ENCODE measurements at regions of chr17 and their contacts with region 1.

Region 1: DNA sequence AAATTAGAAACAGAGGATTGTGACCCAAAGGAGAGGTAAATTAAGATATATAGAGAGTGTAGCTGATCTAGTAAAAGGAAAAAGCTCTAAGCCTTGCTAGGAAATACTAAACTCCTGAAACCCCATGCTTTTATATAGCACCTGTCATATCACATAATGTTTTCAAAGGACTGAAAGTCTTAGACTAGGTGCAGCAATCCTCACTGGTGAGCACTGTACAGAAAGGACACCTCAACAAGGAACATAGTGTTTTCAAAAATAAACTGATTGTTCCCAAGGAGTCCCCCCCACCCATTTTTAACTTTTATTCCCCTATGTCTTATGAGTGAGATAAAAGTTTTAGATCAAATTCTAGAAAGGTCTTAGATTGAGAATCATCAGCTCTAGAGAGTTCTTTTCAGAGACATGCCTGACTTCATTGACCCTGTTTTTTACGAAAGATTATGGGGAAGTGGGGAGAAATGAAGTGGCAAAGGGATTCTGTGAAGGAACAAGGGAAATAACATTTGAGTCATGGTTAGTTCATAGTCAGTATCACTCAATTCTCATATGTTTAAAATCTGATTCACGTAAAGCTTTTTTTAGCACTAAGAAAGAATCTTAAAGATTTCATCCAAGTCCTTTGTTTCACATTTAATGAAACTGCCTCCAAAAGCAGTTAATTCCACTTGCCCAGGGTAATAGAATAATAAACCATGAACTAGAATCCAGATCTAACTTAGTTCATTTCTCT is 166.4 kb downstream of the CYB561 start:
- DNase-seq: peak; percentile 90
- H3K4me3 ChIP-seq: no peak overlapping the region
- H3K27ac ChIP-seq: peak overlapping the region; percentile 96
- H3K4me1 ChIP-seq: peaks cover 51% of the 10 kb centered on the region
- H3K27me3 ChIP-seq: no peaks in the 10 kb centered on the region
- CTCF ChIP-seq: no peak

Region 2: GRCh38 chr17:63292421-63292820 is 12.8 kb after region 1 on chr17:
- CTCF ChIA-PET with region 1: no interaction called
- dilution Hi-C with region 1: no loop called
- in situ Hi-C with region 1: no loop called
- intact Hi-C with region 1: loop called (anchors 1 kb)
- DNase-seq: no peak
- H3K4me3 ChIP-seq: no peak overlapping the region
- H3K27ac ChIP-seq: no peak overlapping the region
- H3K4me1 ChIP-seq: peaks cover 12% of the 10 kb centered on the region
- H3K27me3 ChIP-seq: no peaks in the 10 kb centered on the region
- CTCF ChIP-seq: no peak